Right ventricle myocardium inferior (tissue), 1 donor: ENCODE measurements at regions of chr7 and their contacts with region 1.

Region 1: DNA sequence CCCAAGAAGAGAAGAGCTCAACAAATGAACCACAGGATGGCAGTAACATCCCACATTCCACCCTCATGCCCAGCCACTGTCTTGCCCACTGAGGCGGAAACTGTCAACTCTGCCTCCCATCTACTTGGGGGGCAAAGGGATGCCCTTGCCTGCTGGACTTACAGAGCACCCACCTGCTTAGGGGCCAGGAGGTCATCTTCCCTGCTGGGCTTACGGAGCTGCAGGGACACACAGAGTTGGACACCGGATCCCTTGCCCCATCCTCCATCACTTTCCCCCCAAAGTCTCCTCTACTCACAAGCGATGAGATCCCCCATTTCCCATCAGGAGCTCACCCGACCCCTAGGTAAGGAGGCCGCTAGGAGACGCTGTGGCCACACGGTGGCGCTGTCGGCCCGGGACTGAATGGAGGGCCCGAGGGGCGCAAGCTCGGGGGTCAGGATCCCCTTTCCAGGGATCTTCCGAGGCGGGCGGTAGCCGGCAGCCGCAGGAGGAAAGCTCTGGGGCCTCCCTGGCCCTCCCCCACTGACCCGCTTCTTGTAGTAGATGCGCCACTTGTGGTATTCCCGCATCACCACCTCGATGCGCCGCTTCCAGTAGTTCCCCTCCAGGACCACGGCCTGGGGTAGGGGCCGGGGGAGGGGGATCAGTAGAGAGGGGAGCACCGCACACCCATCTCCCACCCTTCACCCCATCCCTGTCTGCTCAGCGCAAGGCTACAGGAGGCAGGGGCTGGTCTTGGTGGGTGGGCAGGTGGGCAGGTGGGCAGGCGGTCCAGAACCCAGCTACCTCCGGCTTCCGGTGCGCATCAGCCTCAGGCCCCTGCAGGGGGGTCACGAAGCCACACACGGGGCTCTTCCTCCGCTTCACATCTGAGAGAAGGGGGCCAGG is 17.3 kb downstream of the MLXIPL start:
- DNase-seq: peak; percentile 86
- ATAC-seq: peak; percentile 49

Region 2: GRCh38 chr7:73547841-73548240 is 59.2 kb before region 1 on chr7:
- intact Hi-C with region 1: no loop called
- DNase-seq: no peak
- ATAC-seq: no peak

Region 3: GRCh38 chr7:73858807-73859206 is 251.8 kb after region 1 on chr7:
- intact Hi-C with region 1: loop called (anchors 5 kb)
- DNase-seq: no peak
- ATAC-seq: no peak